PC-9 (cell line): ENCODE measurements at regions of chr9 and their contacts with region 1.

Region 1: GRCh38 chr9:74205056-74205455 is 292.1 kb upstream of the RORB start:
- DNase-seq: no peak
- H3K4me3 ChIP-seq: no peak overlapping the region
- H3K27ac ChIP-seq: no peak overlapping the region
- H3K4me1 ChIP-seq: no peaks in the 10 kb centered on the region
- H3K27me3 ChIP-seq: no peaks in the 10 kb centered on the region
- CTCF ChIP-seq: no peak

Region 2: DNA sequence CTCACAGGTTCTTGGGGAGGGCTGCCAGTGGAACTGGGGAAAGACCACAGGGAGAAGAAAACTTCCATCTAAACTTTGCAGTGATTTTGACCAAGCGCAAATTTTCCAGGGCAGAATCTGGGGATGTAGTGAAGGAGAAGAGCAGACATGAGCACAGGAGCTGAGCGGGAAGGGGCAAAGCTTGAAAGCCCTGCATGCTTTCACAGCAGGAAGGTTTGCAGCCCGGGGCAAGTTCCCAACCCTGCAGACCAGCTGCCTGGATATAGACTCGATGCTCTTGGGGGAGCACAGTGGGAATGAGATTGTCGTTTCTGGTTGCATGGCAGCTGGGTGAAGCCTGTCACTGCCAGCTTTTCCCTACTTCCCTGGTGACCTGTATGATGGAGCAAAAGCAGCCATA is 15.3 kb after region 1 on chr9:
- CTCF ChIA-PET with region 1: no interaction called
- POLR2A ChIA-PET with region 1: interaction called, 10 read pairs
- intact Hi-C with region 1: no loop called
- DNase-seq: no peak
- H3K4me3 ChIP-seq: no peak overlapping the region
- H3K27ac ChIP-seq: no peak overlapping the region
- H3K4me1 ChIP-seq: no peaks in the 10 kb centered on the region
- H3K27me3 ChIP-seq: no peaks in the 10 kb centered on the region
- CTCF ChIP-seq: no peak

Region 3: DNA sequence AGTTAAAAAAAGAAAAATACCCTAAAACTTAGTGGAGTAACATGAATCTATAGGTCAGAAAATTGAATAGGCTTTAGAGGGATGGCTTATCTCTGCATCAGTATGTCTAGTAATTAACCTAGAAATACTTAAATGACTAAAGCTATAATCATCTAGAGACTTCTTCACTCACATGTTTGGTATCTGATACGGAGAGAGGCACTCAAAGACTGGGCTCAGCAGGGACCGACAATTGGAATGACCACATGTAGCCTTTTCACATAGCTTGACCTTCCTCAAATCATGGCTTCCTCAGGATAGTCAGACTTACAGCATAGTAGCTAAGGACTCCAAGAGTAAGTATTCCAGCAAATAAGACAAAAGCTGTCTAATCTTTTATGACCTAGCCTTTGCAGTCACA is 186.8 kb after region 1 on chr9:
- CTCF ChIA-PET with region 1: no interaction called
- POLR2A ChIA-PET with region 1: no interaction called
- intact Hi-C with region 1: no loop called
- DNase-seq: no peak
- H3K4me3 ChIP-seq: no peak overlapping the region
- H3K27ac ChIP-seq: no peak overlapping the region
- H3K4me1 ChIP-seq: no peaks in the 10 kb centered on the region; the same call in 1 of the 2 replicates
- H3K27me3 ChIP-seq: no peaks in the 10 kb centered on the region
- CTCF ChIP-seq: no peak